HCT116 (cell line): ENCODE measurements at regions of chr2 and their contacts with region 1.

Region 1: GRCh38 chr2:47323009-47323821 is 79.7 kb upstream of the MSH2 start:
- DNase-seq: peak; percentile 57
- ATAC-seq: peak; percentile 98
- H3K4me3 ChIP-seq: no peak overlapping the region
- H3K27ac ChIP-seq: no peak overlapping the region
- H3K4me1 ChIP-seq: peaks cover 3 to 11% of the 10 kb centered on the region in 2 experiments; a peak in 3 of 4 replicates
- H3K27me3 ChIP-seq: no peaks in the 10 kb centered on the region
- CTCF ChIP-seq: peak; percentile 94 to 97 (median 97)
- POLR2A ChIP-seq: no peak
- RAD21 ChIP-seq: peak; percentile 100

Region 2: DNA sequence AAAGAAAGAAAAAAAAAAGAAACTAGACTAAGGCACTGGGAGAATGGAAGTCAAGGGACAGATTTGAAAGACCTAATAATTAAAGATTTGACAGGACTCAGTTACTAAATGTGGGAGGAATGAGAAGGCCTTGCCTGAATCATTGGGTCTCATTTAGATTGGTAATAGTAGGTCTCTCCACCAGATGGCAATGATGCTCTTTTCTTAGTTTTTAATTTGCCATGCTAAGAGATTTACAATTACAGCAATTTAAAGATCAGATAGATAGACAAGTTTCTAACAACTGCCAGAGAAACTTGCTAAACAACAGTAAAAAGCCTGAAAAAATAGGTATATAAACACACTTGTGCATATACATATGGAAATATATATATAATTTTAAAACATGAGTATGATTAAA is 690.9 kb before region 1 on chr2:
- CTCF ChIA-PET with region 1: interaction called, 3 read pairs
- POLR2A ChIA-PET with region 1: no interaction called
- RAD21 ChIA-PET with region 1: no interaction called
- intact Hi-C with region 1: loop called (anchors 1 kb)
- DNase-seq: peak; percentile 43
- ATAC-seq: peak; percentile 50; the same call in 1 of the 2 replicates
- H3K4me3 ChIP-seq: no peak overlapping the region
- H3K27ac ChIP-seq: no peak overlapping the region
- H3K4me1 ChIP-seq: no peaks in the 10 kb centered on the region
- H3K27me3 ChIP-seq: no peaks in the 10 kb centered on the region
- CTCF ChIP-seq: peak; percentile 50 to 81 (median 67)
- POLR2A ChIP-seq: no peak
- RAD21 ChIP-seq: peak; percentile 82

Region 3: GRCh38 chr2:46650556-46651001 is 672.6 kb before region 1 on chr2:
- CTCF ChIA-PET with region 1: interaction called, 3 read pairs
- POLR2A ChIA-PET with region 1: no interaction called
- RAD21 ChIA-PET with region 1: no interaction called
- intact Hi-C with region 1: loop called (anchors 2 kb)
- DNase-seq: peak; percentile 77
- ATAC-seq: peak; percentile 94
- H3K4me3 ChIP-seq: no peak overlapping the region
- H3K27ac ChIP-seq: no peak overlapping the region
- H3K4me1 ChIP-seq: peaks cover 0 to 5% of the 10 kb centered on the region in 2 experiments; a peak in 1 of 4 replicates
- H3K27me3 ChIP-seq: no peaks in the 10 kb centered on the region
- CTCF ChIP-seq: peak; percentile 86 to 95 (median 89)
- POLR2A ChIP-seq: no peak
- RAD21 ChIP-seq: peak; percentile 94

Region 4: DNA sequence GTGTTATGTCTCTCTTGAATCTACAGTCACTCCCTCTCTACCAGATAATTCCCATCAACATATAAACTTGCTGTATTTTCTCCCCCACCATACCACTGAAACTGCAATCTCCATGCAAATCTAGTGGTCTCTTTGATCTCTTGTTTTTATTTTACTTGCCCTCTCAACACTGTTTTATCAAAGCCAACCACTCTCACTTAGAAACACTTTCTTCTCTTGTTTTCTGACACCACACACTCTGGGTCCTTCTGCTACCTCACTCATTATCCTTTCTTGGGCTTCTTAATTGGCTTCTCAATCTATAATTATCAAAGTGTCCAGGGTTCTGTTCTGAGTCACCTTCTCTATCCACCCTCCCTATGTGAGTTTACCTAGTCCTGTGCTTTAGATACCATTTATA is 405.6 kb before region 1 on chr2:
- CTCF ChIA-PET with region 1: interaction called, 13 read pairs
- POLR2A ChIA-PET with region 1: no interaction called
- RAD21 ChIA-PET with region 1: no interaction called
- intact Hi-C with region 1: loop called (anchors 2 kb)
- DNase-seq: no peak
- ATAC-seq: no peak
- H3K4me3 ChIP-seq: no peak overlapping the region
- H3K27ac ChIP-seq: no peak overlapping the region
- H3K4me1 ChIP-seq: peaks cover 20 to 55% of the 10 kb centered on the region in 2 experiments
- H3K27me3 ChIP-seq: no peaks in the 10 kb centered on the region
- CTCF ChIP-seq: no peak
- POLR2A ChIP-seq: no peak
- RAD21 ChIP-seq: no peak

Region 5: GRCh38 chr2:46929612-46930011 is 393.6 kb before region 1 on chr2:
- CTCF ChIA-PET with region 1: no interaction called
- POLR2A ChIA-PET with region 1: no interaction called
- RAD21 ChIA-PET with region 1: no interaction called
- intact Hi-C with region 1: no loop called
- DNase-seq: no peak
- ATAC-seq: no peak
- H3K4me3 ChIP-seq: no peak overlapping the region
- H3K27ac ChIP-seq: no peak overlapping the region
- H3K4me1 ChIP-seq: no peaks in the 10 kb centered on the region
- H3K27me3 ChIP-seq: no peaks in the 10 kb centered on the region
- CTCF ChIP-seq: no peak
- POLR2A ChIP-seq: no peak
- RAD21 ChIP-seq: no peak

Region 6: DNA sequence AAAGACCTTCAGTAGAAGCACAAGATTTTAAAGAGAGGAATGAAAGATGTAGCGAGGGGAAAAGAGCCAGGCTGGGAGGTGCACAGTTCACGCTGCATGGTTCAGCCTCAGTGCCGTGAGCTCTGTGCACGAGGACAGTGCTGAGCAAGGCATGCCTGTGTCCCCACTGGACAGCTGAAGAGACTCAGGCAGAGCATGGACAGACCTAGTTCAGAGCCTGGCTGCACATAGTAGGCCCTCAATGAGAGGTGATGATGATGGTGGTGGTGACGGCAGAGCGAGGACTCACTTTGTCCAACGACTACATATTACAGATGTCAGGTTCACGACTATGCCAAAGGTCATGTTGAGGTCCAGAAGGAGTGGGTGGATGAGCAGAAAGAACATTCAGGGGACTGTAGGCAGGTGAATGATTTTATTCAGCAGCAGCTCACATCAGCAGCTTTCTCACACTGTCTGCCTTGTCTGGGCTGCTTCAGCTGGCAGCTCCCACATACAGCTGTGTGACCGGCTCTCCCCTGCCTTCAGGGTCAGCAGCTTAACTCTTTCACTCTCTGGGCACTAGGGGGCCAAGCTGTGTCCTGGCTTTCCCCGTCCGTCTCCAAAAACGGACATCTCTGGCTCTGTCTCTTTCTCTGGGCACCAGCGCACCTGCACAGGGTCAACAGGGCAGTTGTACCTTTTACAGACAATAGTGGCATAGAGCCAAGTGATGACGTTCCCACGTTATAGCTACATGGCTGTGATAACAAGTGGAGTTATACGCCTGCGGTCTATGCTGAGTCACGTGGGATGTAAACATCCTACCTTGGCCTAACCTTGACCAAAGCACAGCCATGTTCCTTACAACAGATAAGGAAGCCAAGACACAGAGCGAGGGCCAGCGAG is 330.9 kb after region 1 on chr2:
- CTCF ChIA-PET with region 1: no interaction called
- POLR2A ChIA-PET with region 1: no interaction called
- RAD21 ChIA-PET with region 1: no interaction called
- intact Hi-C with region 1: no loop called
- DNase-seq: no peak
- ATAC-seq: peak; percentile 89
- H3K4me3 ChIP-seq: no peak overlapping the region
- H3K27ac ChIP-seq: no peak overlapping the region
- H3K4me1 ChIP-seq: peaks cover 0 to 10% of the 10 kb centered on the region in 2 experiments; a peak in 1 of 4 replicates
- H3K27me3 ChIP-seq: no peaks in the 10 kb centered on the region
- CTCF ChIP-seq: peak in 2 of 3 experiments; percentile 58 to 62; a peak in 4 of 6 replicates
- POLR2A ChIP-seq: no peak
- RAD21 ChIP-seq: 0 out of 2 replicates have a peak, but pooled peaks have one; percentile 3